Endothelial cell of umbilical vein (primary cell): ENCODE measurements at regions of chr4 and their contacts with region 1.

Region 1: GRCh38 chr4:44150091-44150576 is 298.5 kb downstream of the KCTD8 start:
- DNase-seq: peak; percentile 77
- H3K4me3 ChIP-seq: peak overlapping the region in 1 of 3 experiments; percentile 81
- H3K27ac ChIP-seq: peak overlapping the region; percentile 93
- H3K4me1 ChIP-seq: peaks cover 65% of the 10 kb centered on the region
- H3K27me3 ChIP-seq: no peaks in the 10 kb centered on the region
- CTCF ChIP-seq: no peak
- POLR2A ChIP-seq: peak; percentile 39

Region 2: DNA sequence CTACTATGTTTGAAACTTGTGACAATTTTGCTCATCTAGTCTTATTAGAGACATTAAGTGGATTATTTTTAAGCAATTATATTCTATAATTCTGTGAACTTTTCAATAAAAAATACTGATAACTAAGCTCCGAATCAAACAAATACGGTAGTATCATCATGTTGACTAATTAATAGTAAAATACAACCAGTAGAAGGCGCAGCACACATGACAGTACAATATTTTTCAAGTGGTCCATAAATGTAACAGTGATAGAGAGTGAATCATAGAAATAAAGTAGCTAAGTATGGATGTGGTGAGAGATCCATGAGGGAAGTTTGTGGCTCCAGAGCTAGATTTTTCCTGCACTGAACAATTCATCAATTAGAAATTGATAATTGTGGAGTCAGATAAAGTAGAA is 367.7 kb before region 1 on chr4:
- CTCF ChIA-PET with region 1: interaction called, 3 read pairs
- POLR2A ChIA-PET with region 1: no interaction called
- dilution Hi-C with region 1: no loop called
- intact Hi-C with region 1: loop called (anchors 10 kb)
- DNase-seq: no peak
- H3K4me3 ChIP-seq: no peak overlapping the region
- H3K27ac ChIP-seq: no peak overlapping the region
- H3K4me1 ChIP-seq: no peaks in the 10 kb centered on the region
- H3K27me3 ChIP-seq: no peaks in the 10 kb centered on the region
- CTCF ChIP-seq: no peak
- POLR2A ChIP-seq: no peak

Region 3: DNA sequence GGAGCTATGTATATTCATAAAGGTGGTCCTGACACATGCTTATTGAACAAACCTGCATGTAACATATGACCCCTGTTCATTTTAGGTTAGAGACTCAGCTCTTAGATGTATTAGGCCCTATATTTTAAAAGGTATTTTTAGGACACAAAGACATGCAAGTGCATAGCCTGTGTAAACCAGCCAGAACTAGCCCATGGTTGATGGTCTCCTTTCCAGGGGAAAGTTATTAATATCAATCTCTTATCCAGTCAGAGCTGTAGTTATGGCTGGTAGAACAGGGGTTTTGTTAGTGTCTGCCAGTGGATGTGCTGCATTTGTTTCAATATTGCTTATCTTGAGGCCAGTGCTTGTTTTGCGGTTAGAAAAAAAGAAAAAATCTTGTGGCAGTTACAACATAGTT is 190.2 kb before region 1 on chr4:
- CTCF ChIA-PET with region 1: no interaction called
- POLR2A ChIA-PET with region 1: no interaction called
- dilution Hi-C with region 1: no loop called
- intact Hi-C with region 1: no loop called
- DNase-seq: no peak
- H3K4me3 ChIP-seq: no peak overlapping the region
- H3K27ac ChIP-seq: no peak overlapping the region
- H3K4me1 ChIP-seq: no peaks in the 10 kb centered on the region
- H3K27me3 ChIP-seq: no peaks in the 10 kb centered on the region
- CTCF ChIP-seq: no peak
- POLR2A ChIP-seq: no peak

Region 4: GRCh38 chr4:44025376-44026020 is 124.6 kb before region 1 on chr4:
- CTCF ChIA-PET with region 1: no interaction called
- POLR2A ChIA-PET with region 1: no interaction called
- dilution Hi-C with region 1: no loop called
- intact Hi-C with region 1: loop called (anchors 1 kb)
- DNase-seq: peak; percentile 72
- H3K4me3 ChIP-seq: peak overlapping the region in 1 of 3 experiments; percentile 1
- H3K27ac ChIP-seq: peak overlapping the region; percentile 52
- H3K4me1 ChIP-seq: peaks cover 16% of the 10 kb centered on the region
- H3K27me3 ChIP-seq: no peaks in the 10 kb centered on the region
- CTCF ChIP-seq: no peak
- POLR2A ChIP-seq: no peak

Region 5: GRCh38 chr4:44038811-44039210 is 111.3 kb before region 1 on chr4:
- CTCF ChIA-PET with region 1: no interaction called
- POLR2A ChIA-PET with region 1: no interaction called
- dilution Hi-C with region 1: no loop called
- intact Hi-C with region 1: no loop called
- DNase-seq: no peak
- H3K4me3 ChIP-seq: no peak overlapping the region
- H3K27ac ChIP-seq: no peak overlapping the region
- H3K4me1 ChIP-seq: no peaks in the 10 kb centered on the region
- H3K27me3 ChIP-seq: no peaks in the 10 kb centered on the region
- CTCF ChIP-seq: no peak
- POLR2A ChIP-seq: no peak

Region 6: DNA sequence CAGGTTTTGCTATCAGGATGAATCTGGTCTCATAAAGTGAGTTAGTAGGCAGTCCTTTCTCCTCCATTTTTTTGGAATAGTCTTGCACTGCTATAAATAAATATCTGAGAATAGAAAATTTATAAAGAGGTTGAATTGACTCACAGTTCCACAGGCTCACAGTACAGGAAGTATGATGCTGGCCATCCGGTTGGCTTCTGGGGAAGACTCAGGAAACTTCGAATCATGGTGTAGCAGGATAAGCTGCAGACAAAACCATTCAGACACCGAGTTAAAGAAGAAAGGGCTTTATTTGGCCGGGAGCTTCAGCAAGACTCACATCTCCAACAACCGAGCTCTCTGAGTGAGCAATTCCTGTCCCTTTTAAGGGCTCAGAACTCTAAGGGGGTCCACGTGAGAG is 49.7 kb before region 1 on chr4:
- CTCF ChIA-PET with region 1: no interaction called
- POLR2A ChIA-PET with region 1: no interaction called
- dilution Hi-C with region 1: no loop called
- intact Hi-C with region 1: loop called (anchors 5 kb)
- DNase-seq: peak; percentile 42
- H3K4me3 ChIP-seq: no peak overlapping the region
- H3K27ac ChIP-seq: no peak overlapping the region
- H3K4me1 ChIP-seq: no peaks in the 10 kb centered on the region
- H3K27me3 ChIP-seq: no peaks in the 10 kb centered on the region
- CTCF ChIP-seq: no peak
- POLR2A ChIP-seq: no peak

Region 7: GRCh38 chr4:44121210-44121609 is 28.9 kb before region 1 on chr4:
- CTCF ChIA-PET with region 1: interaction called, 9 read pairs
- POLR2A ChIA-PET with region 1: no interaction called
- dilution Hi-C with region 1: no loop called
- intact Hi-C with region 1: loop called (anchors 1 kb)
- DNase-seq: peak; percentile 78
- H3K4me3 ChIP-seq: no peak overlapping the region
- H3K27ac ChIP-seq: peak overlapping the region; percentile 72
- H3K4me1 ChIP-seq: peaks cover 19% of the 10 kb centered on the region
- H3K27me3 ChIP-seq: no peaks in the 10 kb centered on the region
- CTCF ChIP-seq: no peak
- POLR2A ChIP-seq: no peak

Region 8: DNA sequence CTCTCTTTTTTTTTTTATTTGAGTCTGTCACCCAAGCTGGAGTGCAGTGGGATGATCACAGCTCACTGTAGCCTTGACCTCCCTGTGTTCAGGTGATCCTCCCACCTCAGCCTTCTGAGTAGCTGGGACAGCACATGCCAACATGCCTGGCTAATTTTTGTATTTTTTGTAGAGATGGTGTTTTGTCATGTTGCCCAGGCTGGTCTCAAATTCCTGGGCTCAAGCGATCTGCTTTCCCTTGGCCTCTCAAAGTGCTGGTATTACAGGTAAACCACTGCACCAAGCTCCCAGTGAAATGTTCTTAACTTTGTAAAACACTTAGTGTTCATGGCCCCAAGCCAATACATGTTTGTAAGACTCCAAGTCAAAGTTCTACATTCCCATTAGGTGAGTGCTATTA is 17.6 kb before region 1 on chr4:
- CTCF ChIA-PET with region 1: no interaction called
- POLR2A ChIA-PET with region 1: no interaction called
- dilution Hi-C with region 1: no loop called
- intact Hi-C with region 1: no loop called
- DNase-seq: no peak
- H3K4me3 ChIP-seq: no peak overlapping the region
- H3K27ac ChIP-seq: no peak overlapping the region
- H3K4me1 ChIP-seq: no peaks in the 10 kb centered on the region
- H3K27me3 ChIP-seq: no peaks in the 10 kb centered on the region
- CTCF ChIP-seq: no peak
- POLR2A ChIP-seq: no peak

Region 9: GRCh38 chr4:44448548-44449461 is 298.7 kb after region 1 on chr4 and contains the start of gene KCTD8:
- CTCF ChIA-PET with region 1: interaction called, 3 read pairs
- POLR2A ChIA-PET with region 1: no interaction called
- dilution Hi-C with region 1: no loop called
- intact Hi-C with region 1: loop called (anchors 2 kb)
- DNase-seq: peak; percentile 78
- H3K4me3 ChIP-seq: peak within 1 kb of the TSS in 2 of 3 experiments; percentile 30 to 36
- H3K27ac ChIP-seq: no peak within 1 kb of the TSS
- H3K4me1 ChIP-seq: peaks cover 10% of the 10 kb centered on the region
- H3K27me3 ChIP-seq: peaks cover 25 to 66% of the 10 kb centered on the region in 2 experiments
- CTCF ChIP-seq: peak; percentile 73 to 83
- POLR2A ChIP-seq: no peak
- total RNA-seq, gene KCTD8: 0.80 and 0.88 TPM in 2 replicates